ENCODE measurements at regions of chr12 and their contacts with region 1.

Region 1: DNA sequence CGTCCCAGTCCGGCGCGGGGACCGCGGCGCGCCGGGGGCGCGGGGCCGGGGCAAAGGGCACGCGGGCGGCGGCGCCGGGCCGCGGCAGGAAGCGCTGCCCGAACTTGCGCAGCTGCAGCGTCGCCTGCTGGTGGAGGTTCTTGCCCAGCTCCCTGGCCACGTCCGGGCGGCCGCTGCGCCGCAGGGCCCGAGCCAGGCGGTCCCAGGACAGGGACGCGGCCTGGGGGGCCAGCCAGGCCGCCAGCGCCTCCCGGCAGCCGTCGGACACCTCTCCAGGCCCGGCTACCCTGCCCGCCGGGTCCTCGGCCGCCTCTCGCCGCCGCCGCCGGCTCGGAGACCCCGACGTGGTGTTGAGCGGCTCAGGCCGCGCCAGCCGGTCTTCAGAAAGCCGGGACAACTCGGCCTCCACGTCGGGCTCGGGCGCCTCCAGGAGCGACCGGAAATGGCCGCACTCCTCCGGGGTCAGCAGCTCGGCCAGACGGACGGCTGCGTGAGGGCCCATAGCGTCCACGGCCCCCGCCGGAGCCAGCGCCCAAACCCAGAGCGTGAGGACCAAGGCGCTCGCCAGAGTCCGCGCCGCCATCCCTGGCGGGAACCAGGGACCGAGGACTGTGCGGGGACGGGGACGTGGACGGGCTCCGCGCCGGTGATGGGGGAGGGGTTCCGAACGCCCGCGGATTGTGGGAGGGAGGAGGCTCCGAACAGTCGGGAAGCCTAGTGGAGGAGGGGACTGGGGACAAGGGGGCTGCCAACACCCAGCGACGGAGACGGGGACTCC is 34.0 kb downstream of the FIGNL2 start:
- DNase-seq: peak; percentile 86
- H3K4me3 ChIP-seq: peak overlapping the region; percentile 49 to 73 (median 68)
- H3K27ac ChIP-seq: peak overlapping the region; percentile 76 to 88 (median 84)
- H3K4me1 ChIP-seq: peaks cover 4 to 13% (median 10%) of the 10 kb centered on the region in 4 donors
- H3K27me3 ChIP-seq: no peaks in the 10 kb centered on the region
- CTCF ChIP-seq: peak in 4 of 5 experiments; percentile 41 to 66 (median 54)
- EP300 ChIP-seq: no peak
- POLR2A ChIP-seq: peak; percentile 38

Region 2: DNA sequence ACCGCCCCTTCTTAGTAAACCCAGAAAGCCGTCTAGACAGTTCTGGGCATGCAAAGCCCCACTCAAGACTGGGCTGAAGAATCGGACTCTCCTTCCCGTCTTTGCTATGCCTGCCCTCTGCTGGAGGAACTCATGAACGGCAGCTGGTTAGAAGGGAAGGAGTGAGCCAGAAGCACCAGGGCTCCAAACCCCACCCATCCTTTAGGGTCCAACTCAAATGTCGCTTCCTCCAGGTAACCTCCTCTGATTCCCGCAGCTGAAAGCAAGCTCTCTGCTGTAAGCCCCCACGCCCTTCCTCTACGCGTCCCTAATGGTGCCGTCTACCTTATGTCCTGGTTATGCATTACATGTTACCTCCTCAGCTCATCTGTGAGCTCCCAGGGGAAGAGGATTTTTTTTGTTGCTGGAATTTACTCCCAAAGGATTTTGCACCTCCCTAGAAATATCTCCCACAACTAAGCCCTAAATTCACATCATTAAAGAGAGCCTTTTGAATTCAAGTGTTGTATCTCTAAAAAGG is 282.5 kb before region 1 on chr12:
- in situ Hi-C with region 1: loop called in 1 of 4 experiments (anchors 25 kb)
- intact Hi-C with region 1: no loop called
- DNase-seq: peak; percentile 79
- H3K4me3 ChIP-seq: no peak overlapping the region
- H3K27ac ChIP-seq: no peak overlapping the region
- H3K4me1 ChIP-seq: peaks cover 0 to 2% (median 0%) of the 10 kb centered on the region in 4 donors
- H3K27me3 ChIP-seq: peaks cover 22% of the 10 kb centered on the region
- CTCF ChIP-seq: peak; percentile 71 to 89 (median 85)
- EP300 ChIP-seq: no peak
- POLR2A ChIP-seq: no peak

Region 3: GRCh38 chr12:51773145-51773867 is 41.2 kb before region 1 on chr12:
- in situ Hi-C with region 1: no loop called
- intact Hi-C with region 1: no loop called
- DNase-seq: no peak
- H3K4me3 ChIP-seq: no peak overlapping the region
- H3K27ac ChIP-seq: no peak overlapping the region
- H3K4me1 ChIP-seq: no peaks in the 10 kb centered on the region
- H3K27me3 ChIP-seq: no peaks in the 10 kb centered on the region
- CTCF ChIP-seq: no peak
- EP300 ChIP-seq: no peak
- POLR2A ChIP-seq: no peak

Region 4: GRCh38 chr12:52023182-52023975 is 208.9 kb after region 1 on chr12:
- in situ Hi-C with region 1: no loop called
- intact Hi-C with region 1: no loop called
- DNase-seq: peak; percentile 93
- H3K4me3 ChIP-seq: peak overlapping the region; percentile 34 to 54 (median 46)
- H3K27ac ChIP-seq: peak overlapping the region; percentile 93 to 95 (median 94)
- H3K4me1 ChIP-seq: peaks cover 17 to 39% (median 35%) of the 10 kb centered on the region in 4 donors
- H3K27me3 ChIP-seq: no peaks in the 10 kb centered on the region
- CTCF ChIP-seq: peak; percentile 97 to 99 (median 98)
- EP300 ChIP-seq: no peak
- POLR2A ChIP-seq: no peak

Measured in transverse colon (tissue), 4 donors.